ENCODE measurements at regions of chr19 and their contacts with region 1.

Region 1: GRCh38 chr19:14571695-14572490 is at the start of gene NDUFB7:
- DNase-seq: peak; percentile 95
- ATAC-seq: peak; percentile 95
- H3K4me3 Mint-ChIP-seq: peak within 1 kb of the TSS; percentile 95
- H3K27ac Mint-ChIP-seq: peak within 1 kb of the TSS; percentile 92
- H3K4me1 Mint-ChIP-seq: peaks cover 36% of the 10 kb centered on the region
- H3K27me3 Mint-ChIP-seq: no peaks in the 10 kb centered on the region
- total RNA-seq, gene NDUFB7: 112 to 121 TPM

Region 2: GRCh38 chr19:14786421-14786851 is 214.5 kb after region 1 on chr19:
- CTCF ChIA-PET with region 1: no interaction called
- POLR2A ChIA-PET with region 1: no interaction called
- intact Hi-C with region 1: loop called in 1 of 2 experiments (anchors 5 kb)
- DNase-seq: peak; percentile 63
- ATAC-seq: no peak
- H3K4me3 Mint-ChIP-seq: no peak overlapping the region
- H3K27ac Mint-ChIP-seq: no peak overlapping the region
- H3K4me1 Mint-ChIP-seq: peaks cover 20% of the 10 kb centered on the region
- H3K27me3 Mint-ChIP-seq: peaks cover 9% of the 10 kb centered on the region